Transverse colon (tissue), 4 donors: ENCODE measurements at regions of chr3 and their contacts with region 1.

Region 1: GRCh38 chr3:36729204-36730056 is 34.9 kb downstream of the DCLK3 start:
- DNase-seq: no peak
- H3K4me3 ChIP-seq: no peak overlapping the region
- H3K27ac ChIP-seq: no peak overlapping the region
- H3K4me1 ChIP-seq: no peaks in the 10 kb centered on the region
- H3K27me3 ChIP-seq: no peaks in the 10 kb centered on the region
- CTCF ChIP-seq: peak; percentile 65 to 69 (median 68)
- EP300 ChIP-seq: no peak
- POLR2A ChIP-seq: no peak

Region 2: DNA sequence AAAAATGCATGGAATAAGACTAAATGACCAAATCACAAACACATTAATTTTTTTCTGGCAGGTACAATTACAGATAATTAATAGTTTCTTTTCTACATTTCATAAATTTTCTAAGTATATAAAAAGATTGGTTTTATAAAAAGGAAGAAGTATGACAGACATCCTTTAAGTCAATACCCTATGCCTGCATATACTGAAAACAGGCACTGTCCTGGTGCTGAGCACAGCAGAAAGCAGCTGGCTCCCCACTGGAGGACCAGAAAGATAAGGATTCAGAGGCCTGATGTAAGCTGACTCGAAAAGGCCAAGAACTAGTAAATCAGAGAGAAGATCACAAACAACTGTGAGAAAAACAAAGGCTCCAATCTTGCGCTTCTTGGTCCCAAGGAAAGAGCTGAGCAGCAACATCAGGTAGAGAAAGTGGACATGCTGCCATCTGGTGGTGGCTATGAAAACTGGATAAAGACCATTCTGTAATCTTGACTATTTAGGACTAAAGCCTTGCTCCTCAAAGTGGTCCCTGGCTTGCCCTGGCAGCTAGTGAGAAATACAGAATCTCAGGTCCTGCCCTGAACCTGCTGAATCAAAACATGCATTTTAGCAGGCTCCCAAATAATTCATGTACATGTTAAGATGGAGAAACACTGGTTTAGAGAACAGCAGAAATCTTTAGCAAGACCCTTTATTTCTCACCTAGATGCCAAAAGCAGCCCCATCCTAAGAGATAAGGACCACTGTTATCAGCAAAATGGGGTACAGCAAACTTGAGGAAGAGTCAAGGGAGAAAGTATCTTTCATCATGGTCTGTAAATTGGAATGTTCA is 139.4 kb after region 1 on chr3:
- in situ Hi-C with region 1: loop called (anchors 10 to 25 kb)
- intact Hi-C with region 1: loop called (anchors 5 kb)
- DNase-seq: peak; percentile 37
- H3K4me3 ChIP-seq: no peak overlapping the region
- H3K27ac ChIP-seq: no peak overlapping the region
- H3K4me1 ChIP-seq: no peaks in the 10 kb centered on the region
- H3K27me3 ChIP-seq: no peaks in the 10 kb centered on the region
- CTCF ChIP-seq: peak; percentile 55 to 82 (median 71)
- EP300 ChIP-seq: no peak
- POLR2A ChIP-seq: no peak

Region 3: GRCh38 chr3:36876181-36876936 is 146.9 kb after region 1 on chr3:
- in situ Hi-C with region 1: loop called in 2 of 4 experiments (anchors 10 to 25 kb)
- intact Hi-C with region 1: loop called (anchors 5 kb)
- DNase-seq: no peak
- H3K4me3 ChIP-seq: no peak overlapping the region
- H3K27ac ChIP-seq: peak overlapping the region; percentile 4 to 48 (median 12)
- H3K4me1 ChIP-seq: peaks cover 0 to 5% (median 0%) of the 10 kb centered on the region in 4 donors
- H3K27me3 ChIP-seq: no peaks in the 10 kb centered on the region
- CTCF ChIP-seq: no peak
- EP300 ChIP-seq: no peak
- POLR2A ChIP-seq: no peak

Region 4: GRCh38 chr3:36957862-36958686 is 228.6 kb after region 1 on chr3:
- in situ Hi-C with region 1: loop called (anchors 10 to 25 kb)
- intact Hi-C with region 1: loop called (anchors 5 kb)
- DNase-seq: peak; percentile 20
- H3K4me3 ChIP-seq: peak overlapping the region in 1 of 4 donors; percentile 11
- H3K27ac ChIP-seq: peak overlapping the region in 3 of 4 donors; percentile 22 to 64 (median 54)
- H3K4me1 ChIP-seq: peaks cover 0 to 40% (median 4%) of the 10 kb centered on the region in 4 donors
- H3K27me3 ChIP-seq: no peaks in the 10 kb centered on the region
- CTCF ChIP-seq: no peak
- EP300 ChIP-seq: no peak
- POLR2A ChIP-seq: no peak

Region 5: DNA sequence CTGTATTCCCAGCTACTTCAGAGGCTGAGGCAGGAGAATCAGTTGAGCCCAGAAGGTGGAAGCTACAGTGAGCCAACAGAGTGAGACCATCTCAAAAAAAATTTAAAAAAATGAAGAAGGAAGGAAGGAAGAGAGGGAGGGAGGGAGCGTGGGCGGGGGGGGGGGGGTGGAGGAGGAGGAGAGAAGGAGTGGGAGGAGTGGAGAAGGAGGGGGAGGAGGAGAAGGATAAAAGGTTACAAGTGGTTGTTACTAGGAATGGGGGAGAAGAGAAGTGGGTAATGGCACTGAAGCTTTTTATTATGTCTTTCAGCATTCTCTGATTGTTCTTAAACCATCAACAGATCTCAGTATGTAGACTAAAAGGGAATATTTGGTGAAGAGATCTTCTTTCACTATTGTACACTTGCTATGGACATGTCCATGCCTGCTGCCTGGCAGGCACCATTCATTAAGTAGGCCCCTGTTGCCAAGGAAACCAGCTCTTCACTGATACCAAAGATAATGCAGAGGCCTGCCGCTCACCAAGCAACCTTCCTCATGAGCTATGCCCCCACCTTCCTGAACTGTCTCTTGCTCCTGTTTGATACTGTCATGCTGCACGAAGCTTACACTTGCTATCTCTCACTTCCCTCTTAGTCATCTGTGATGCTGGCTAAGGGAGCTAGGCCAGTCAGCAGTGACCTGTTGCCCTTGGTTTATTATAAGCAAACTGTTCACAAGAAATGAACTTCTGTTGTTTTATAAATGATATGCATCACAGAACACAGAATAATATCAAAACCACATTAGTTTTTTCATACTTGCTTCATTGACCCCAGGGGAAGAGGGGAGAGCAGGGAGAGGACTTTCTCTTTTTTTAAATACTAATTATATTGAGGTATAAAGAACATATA is 240.4 kb after region 1 on chr3:
- in situ Hi-C with region 1: loop called in 2 of 4 experiments (anchors 25 kb)
- intact Hi-C with region 1: no loop called
- DNase-seq: no peak
- H3K4me3 ChIP-seq: no peak overlapping the region
- H3K27ac ChIP-seq: no peak overlapping the region
- H3K4me1 ChIP-seq: peaks cover 0 to 4% (median 0%) of the 10 kb centered on the region in 4 donors
- H3K27me3 ChIP-seq: no peaks in the 10 kb centered on the region
- CTCF ChIP-seq: no peak
- EP300 ChIP-seq: no peak
- POLR2A ChIP-seq: no peak

Region 6: GRCh38 chr3:37221407-37221806 is 492.0 kb after region 1 on chr3:
- in situ Hi-C with region 1: loop called in 3 of 4 experiments (anchors 25 kb)
- intact Hi-C with region 1: no loop called
- DNase-seq: no peak
- H3K4me3 ChIP-seq: no peak overlapping the region
- H3K27ac ChIP-seq: no peak overlapping the region
- H3K4me1 ChIP-seq: no peaks in the 10 kb centered on the region
- H3K27me3 ChIP-seq: no peaks in the 10 kb centered on the region
- CTCF ChIP-seq: no peak
- EP300 ChIP-seq: no peak
- POLR2A ChIP-seq: no peak